Activated naive CD4-positive, alpha-beta T cell treated with anti-CD3 and anti-CD28 coated beads for 36 hours (primary cell): ENCODE measurements at regions of chr2 and their contacts with region 1.

Region 1: GRCh38 chr2:183078465-183079138 is at the start of gene DUSP19:
- DNase-seq: peak; percentile 94
- H3K4me3 Mint-ChIP-seq: peak within 1 kb of the TSS; percentile 93
- H3K27ac Mint-ChIP-seq: peak within 1 kb of the TSS; percentile 50
- H3K4me1 Mint-ChIP-seq: peaks cover 6% of the 10 kb centered on the region
- H3K27me3 Mint-ChIP-seq: no peaks in the 10 kb centered on the region
- total RNA-seq, gene DUSP19: 5.0 to 6.0 TPM

Region 2: GRCh38 chr2:183038341-183039300 is 40.0 kb before region 1 on chr2 and contains the start of gene NCKAP1:
- CTCF ChIA-PET with region 1: no interaction called
- intact Hi-C with region 1: loop called (anchors 1 kb)
- DNase-seq: peak; percentile 87
- H3K4me3 Mint-ChIP-seq: peak within 1 kb of the TSS; percentile 78
- H3K27ac Mint-ChIP-seq: no peak within 1 kb of the TSS
- H3K4me1 Mint-ChIP-seq: peaks cover 22% of the 10 kb centered on the region
- H3K27me3 Mint-ChIP-seq: peaks cover 46% of the 10 kb centered on the region
- total RNA-seq, gene NCKAP1: 10.6 to 11.9 TPM

Region 3: GRCh38 chr2:183124222-183124956 is 45.8 kb after region 1 on chr2 and contains the start of gene NUP35:
- CTCF ChIA-PET with region 1: no interaction called
- intact Hi-C with region 1: loop called (anchors 1 kb)
- DNase-seq: peak; percentile 90
- H3K4me3 Mint-ChIP-seq: peak within 1 kb of the TSS; percentile 93
- H3K27ac Mint-ChIP-seq: peak within 1 kb of the TSS; percentile 95
- H3K4me1 Mint-ChIP-seq: peaks cover 32% of the 10 kb centered on the region
- H3K27me3 Mint-ChIP-seq: peaks cover 6% of the 10 kb centered on the region
- total RNA-seq, gene NUP35: 25.6 to 28.8 TPM

Region 4: GRCh38 chr2:183204397-183204796 is 125.8 kb after region 1 on chr2:
- CTCF ChIA-PET with region 1: no interaction called
- intact Hi-C with region 1: no loop called
- DNase-seq: no peak
- H3K4me3 Mint-ChIP-seq: no peak overlapping the region
- H3K27ac Mint-ChIP-seq: no peak overlapping the region
- H3K4me1 Mint-ChIP-seq: no peaks in the 10 kb centered on the region
- H3K27me3 Mint-ChIP-seq: no peaks in the 10 kb centered on the region